SK-N-SH (cell line): ENCODE measurements at regions of chr6 and their contacts with region 1.

Region 1: GRCh38 chr6:63764318-63764916 is 128.8 kb downstream of the PHF3 start:
- DNase-seq: no peak
- H3K4me3 ChIP-seq: no peak overlapping the region
- H3K27ac ChIP-seq: no peak overlapping the region
- H3K4me1 ChIP-seq: no peaks in the 10 kb centered on the region
- H3K27me3 ChIP-seq: no peaks in the 10 kb centered on the region
- CTCF ChIP-seq: peak; percentile 69
- EP300 ChIP-seq: no peak
- RAD21 ChIP-seq: peak; percentile 68

Region 2: DNA sequence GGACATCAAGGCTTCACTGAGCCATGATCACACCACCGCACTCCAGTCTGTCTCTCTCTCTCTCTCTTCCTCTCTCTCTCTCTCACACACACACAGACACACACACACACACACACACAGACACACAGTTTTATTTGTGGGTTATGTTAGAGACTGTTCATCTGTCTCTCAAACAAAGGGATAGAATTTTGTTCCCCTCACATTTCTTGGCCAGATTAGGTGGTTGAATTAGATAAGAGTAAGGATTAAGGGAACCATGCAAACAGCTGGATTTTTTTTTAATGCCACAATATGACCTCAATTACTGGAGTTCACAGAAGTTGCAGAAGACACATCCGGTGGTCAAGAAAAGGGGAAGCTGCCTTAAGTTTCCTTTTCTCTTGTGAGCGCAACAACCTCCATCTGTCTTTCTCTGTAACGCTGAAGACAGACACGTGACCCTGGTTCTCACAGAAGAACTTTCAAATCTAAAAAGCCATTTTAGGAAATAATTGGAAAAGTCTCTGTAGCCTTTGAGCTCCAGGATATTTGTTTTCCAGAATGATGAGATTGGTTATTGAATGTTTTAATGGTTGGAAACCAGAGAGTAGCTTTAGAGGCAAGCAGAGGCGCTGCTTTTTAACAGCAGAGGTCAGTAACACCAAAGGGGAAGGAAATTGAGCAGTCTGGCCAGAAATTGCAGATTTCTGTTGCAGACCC is 411.7 kb before region 1 on chr6:
- CTCF ChIA-PET with region 1: interaction called, 20 read pairs
- POLR2A ChIA-PET with region 1: no interaction called
- DNase-seq: peak; percentile 5
- H3K4me3 ChIP-seq: no peak overlapping the region
- H3K27ac ChIP-seq: no peak overlapping the region
- H3K4me1 ChIP-seq: peaks cover 0 to 12% of the 10 kb centered on the region in 2 experiments; a peak in 1 of 4 replicates
- H3K27me3 ChIP-seq: no peaks in the 10 kb centered on the region
- CTCF ChIP-seq: peak; percentile 70
- EP300 ChIP-seq: no peak
- RAD21 ChIP-seq: peak; percentile 81

Region 3: GRCh38 chr6:63742060-63742459 is 22.4 kb before region 1 on chr6:
- CTCF ChIA-PET with region 1: interaction called, 11 read pairs
- POLR2A ChIA-PET with region 1: no interaction called
- DNase-seq: no peak
- H3K4me3 ChIP-seq: no peak overlapping the region
- H3K27ac ChIP-seq: no peak overlapping the region
- H3K4me1 ChIP-seq: no peaks in the 10 kb centered on the region; a peak in 1 of 4 replicates
- H3K27me3 ChIP-seq: no peaks in the 10 kb centered on the region
- CTCF ChIP-seq: no peak
- EP300 ChIP-seq: no peak
- RAD21 ChIP-seq: no peak

Region 4: DNA sequence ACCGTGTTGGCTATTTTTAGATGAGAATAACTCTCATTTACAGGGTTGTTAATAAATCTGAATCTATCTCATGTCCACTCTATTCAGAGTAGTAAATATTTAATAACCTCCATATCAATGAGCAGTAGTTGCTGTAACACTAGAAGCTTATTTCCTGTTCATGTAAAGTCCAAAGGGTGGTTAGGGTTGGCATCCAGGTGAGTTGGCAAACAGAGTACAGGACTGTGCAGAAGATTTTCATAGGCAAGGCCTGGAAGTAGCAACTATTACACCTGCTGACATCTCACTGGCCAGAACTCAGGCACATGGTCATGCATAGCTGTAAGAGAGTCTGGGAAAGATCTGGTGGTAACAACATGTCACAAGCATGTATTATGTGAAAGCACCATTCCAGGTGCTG is 18.7 kb after region 1 on chr6:
- CTCF ChIA-PET with region 1: interaction called, 13 read pairs
- POLR2A ChIA-PET with region 1: no interaction called
- DNase-seq: no peak
- H3K4me3 ChIP-seq: no peak overlapping the region
- H3K27ac ChIP-seq: no peak overlapping the region
- H3K4me1 ChIP-seq: no peaks in the 10 kb centered on the region
- H3K27me3 ChIP-seq: no peaks in the 10 kb centered on the region
- CTCF ChIP-seq: no peak
- EP300 ChIP-seq: no peak
- RAD21 ChIP-seq: no peak